ENCODE measurements at regions of chr6 and their contacts with region 1.

Region 1: DNA sequence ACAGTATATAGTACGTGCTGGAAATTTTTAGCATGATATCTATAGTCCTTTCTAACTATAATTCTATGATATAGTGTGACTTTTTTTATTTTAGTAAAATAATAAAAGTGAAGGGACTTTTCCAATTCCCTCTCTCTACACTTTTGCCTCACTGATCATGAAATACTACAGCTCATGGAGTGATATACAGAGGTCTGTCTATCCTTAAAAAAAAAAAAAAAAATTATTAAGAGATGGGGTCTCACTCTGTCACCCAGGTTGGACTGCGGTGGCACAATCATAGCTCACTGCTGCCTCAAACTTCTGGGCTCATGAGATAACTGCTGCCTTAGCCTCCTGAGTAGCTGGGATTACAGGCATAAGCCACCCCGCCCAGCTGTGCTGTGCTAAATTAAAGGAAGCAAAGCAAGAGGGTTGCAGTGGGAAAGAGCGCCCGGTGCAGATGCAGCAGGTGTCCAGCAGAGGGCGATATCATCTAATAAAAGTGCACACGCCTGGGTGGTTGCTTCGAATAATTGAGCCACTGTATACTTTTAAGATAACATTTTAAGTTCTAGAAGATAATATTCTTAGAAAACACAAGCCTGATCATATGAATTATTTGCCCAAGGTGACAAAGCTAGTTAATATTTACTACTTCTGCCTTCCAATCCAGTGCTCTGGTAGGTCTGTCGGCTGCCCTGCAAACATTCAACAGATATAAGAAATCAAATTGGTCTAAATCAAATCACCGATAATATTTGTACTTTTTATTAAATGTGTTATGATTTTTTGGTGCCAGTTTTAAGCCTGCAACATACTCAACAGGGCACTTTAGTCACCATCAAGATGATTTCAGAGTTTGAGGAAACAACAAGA is 94.9 kb upstream of the NT5E start:
- DNase-seq: no peak
- H3K4me3 ChIP-seq: no peak overlapping the region
- H3K27me3 ChIP-seq: no peaks in the 10 kb centered on the region
- CTCF ChIP-seq: peak; percentile 89

Region 2: DNA sequence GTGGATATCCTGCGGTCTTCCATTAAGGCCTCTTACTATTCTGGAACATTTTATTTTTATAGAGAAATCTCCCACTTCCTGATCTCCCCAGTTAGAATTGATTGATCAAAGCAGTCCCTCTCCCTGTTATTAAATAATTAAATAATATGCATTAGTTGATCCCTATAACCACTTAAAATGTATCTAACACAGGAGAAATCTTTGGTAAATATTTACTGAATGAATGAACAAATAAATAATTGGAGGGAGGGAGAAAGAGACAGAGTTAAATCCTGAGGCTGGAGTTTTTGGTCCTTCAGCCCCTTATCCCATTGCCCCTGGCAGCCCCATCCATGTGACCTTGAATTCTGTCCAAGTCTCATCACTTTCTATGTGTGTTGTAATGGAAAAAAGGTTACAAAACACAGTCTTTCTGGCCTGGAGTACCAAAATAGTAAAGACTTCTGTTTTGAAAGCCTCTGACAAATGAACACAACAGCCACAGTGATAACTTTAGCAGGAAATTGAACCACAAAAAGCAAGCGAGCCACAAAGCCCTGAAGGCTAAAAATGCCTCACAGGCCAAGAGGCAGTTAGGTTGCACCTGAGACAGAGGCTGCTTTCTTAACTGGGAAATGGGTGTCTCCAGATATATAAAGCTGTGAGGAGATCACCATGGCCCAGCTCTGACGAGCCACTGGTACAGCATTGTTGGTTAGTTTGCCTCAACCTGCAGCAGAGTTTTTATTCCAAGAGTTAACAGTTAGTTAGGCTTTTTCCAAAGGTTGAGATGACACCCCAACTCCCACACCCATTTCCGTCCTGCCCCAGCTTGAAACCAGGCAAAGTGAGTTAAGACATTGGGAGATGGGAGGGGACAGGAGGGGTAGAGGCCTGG is 106.2 kb after region 1 on chr6:
- CTCF ChIA-PET with region 1: interaction called, 16 read pairs
- POLR2A ChIA-PET with region 1: no interaction called
- DNase-seq: no peak
- H3K4me3 ChIP-seq: no peak overlapping the region
- H3K27me3 ChIP-seq: no peaks in the 10 kb centered on the region
- CTCF ChIP-seq: no peak

Region 3: DNA sequence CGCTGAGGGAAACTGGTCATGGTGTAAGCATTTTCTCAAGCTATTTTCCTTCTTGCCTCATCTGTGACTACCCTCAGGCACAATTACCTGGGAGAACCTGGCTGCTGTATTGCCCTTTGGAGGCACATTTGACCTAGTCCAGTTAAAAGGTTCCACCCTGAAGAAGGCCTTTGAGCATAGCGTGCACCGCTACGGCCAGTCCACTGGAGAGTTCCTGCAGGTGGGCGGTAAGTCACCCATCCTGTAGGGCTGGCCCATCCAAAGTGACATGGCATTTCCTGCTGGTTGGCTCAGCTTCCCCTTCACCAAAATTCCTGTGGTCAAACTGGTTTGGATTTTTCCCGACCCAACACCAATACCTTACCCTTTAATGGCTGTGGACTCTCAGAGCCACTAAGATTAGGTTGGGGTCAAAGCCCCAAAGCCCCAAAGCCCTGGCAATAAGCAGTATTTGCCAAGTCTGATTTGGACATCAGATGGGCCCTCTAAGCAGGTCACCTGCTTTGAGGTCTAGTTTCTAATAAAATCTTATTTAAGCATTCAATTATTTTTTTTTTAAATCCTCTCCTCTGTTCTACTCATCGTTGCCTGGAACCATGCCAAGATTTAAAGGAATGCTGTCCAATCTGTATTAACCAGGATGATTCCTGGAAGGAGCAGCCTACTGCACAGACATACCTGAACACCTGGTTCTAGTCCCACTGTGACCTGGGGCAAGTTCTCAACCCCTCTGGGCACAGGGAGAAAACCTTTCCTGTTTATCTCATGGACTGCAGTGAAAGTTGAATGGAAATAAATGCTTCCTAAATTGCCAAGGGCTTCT is 135.7 kb after region 1 on chr6:
- CTCF ChIA-PET with region 1: interaction called, 81 read pairs
- POLR2A ChIA-PET with region 1: no interaction called
- DNase-seq: no peak
- H3K4me3 ChIP-seq: no peak overlapping the region
- H3K27me3 ChIP-seq: no peaks in the 10 kb centered on the region
- CTCF ChIP-seq: no peak